WTC11 (cell line): ENCODE measurements at regions of chrX and their contacts with region 1.

Region 1: GRCh38 chrX:153032397-153033118 is 23.7 kb upstream of the PNMA3 start:
- DNase-seq: peak; percentile 64
- ATAC-seq: peak; percentile 76
- H3K4me3 Mint-ChIP-seq: peak overlapping the region; percentile 41; the same call in 1 of the 2 replicates
- H3K27ac Mint-ChIP-seq: no peak overlapping the region
- H3K4me1 Mint-ChIP-seq: no peaks in the 10 kb centered on the region
- H3K27me3 Mint-ChIP-seq: peaks cover 13% of the 10 kb centered on the region
- CTCF ChIP-seq: peak; percentile 77

Region 2: DNA sequence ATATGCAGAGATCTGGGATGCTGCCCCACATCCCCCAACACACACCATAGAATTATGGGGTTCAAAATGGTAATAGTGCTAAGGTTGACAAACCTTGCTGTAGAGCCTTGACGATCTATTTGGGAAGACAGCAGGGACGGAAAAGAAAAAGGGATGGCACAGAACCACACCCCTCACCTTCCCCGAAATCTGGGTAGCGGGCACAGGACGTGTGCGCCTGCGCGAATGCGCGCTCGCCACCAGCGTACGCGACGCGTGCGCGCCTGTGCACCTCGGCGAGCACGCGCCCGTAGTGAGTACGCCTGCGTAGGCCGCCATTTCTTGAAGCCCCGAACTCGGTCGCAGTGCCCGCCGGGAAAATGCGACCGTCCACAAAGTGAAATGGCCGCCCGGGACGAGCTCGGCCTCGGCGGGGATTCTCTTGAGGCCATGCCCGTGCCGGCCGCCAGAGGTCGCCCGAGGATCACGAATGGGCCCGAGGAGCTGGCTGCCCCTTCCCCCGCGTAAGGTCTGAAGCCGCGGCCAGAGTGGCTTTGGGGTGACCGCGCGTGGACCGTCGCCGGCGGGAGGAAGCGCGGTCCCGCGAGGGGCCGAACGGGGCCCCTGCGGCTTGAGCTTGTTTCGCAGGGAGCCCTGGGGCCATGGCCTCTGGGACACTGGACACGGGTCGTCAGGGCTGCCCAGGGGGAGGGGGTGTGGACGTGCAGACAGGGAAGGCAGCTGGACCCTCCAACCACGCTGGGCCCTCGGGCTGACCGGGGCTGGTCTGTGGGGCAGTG is 91.0 kb before region 1 on chrX:
- CTCF ChIA-PET with region 1: interaction called, 11 read pairs
- POLR2A ChIA-PET with region 1: no interaction called
- DNase-seq: peak; percentile 84
- ATAC-seq: peak; percentile 85
- H3K4me3 Mint-ChIP-seq: peak overlapping the region; percentile 67
- H3K27ac Mint-ChIP-seq: no peak overlapping the region; the same call in 1 of the 2 replicates
- H3K4me1 Mint-ChIP-seq: peaks cover 12% of the 10 kb centered on the region
- H3K27me3 Mint-ChIP-seq: peaks cover 3% of the 10 kb centered on the region
- CTCF ChIP-seq: peak; percentile 73

Region 3: DNA sequence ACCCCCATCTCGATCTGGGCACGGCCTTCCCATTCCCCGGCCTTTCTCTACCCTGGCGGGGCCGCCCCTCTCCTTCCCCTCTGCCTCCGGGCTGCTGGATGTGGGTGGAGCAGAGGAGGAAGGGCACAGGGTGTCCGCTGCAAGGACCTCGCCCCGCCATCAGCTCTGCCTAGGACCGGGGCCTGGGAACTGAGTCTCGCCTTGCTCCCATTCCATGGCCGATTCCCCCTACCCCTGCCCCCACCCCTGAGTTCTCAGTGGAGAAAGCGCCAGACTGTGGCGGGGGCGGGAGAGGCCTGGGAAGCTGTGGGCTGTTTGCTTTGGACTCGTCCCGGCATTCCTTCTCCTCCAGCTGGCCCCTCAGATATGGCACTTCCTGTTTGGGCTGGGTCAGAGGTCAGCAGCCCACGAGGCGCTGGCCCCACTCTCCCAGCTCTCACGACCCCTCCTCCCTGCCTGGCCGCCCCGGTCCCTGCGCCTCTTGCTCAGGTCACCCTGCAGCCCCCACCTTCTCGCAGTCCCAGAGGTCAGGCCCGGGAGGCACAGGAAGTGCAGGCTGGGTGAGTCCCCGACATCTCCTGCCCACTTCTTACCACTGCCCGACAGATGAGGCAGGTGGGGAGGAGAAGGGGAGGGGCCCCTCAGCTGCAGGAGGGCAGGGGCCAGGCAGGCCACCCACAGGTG is 455.8 kb after region 1 on chrX:
- CTCF ChIA-PET with region 1: no interaction called
- POLR2A ChIA-PET with region 1: no interaction called
- DNase-seq: no peak
- ATAC-seq: no peak; the same call in 1 of the 2 replicates
- H3K4me3 Mint-ChIP-seq: no peak overlapping the region
- H3K27ac Mint-ChIP-seq: no peak overlapping the region
- H3K4me1 Mint-ChIP-seq: peaks cover 6% of the 10 kb centered on the region; the same call in 1 of the 2 replicates
- H3K27me3 Mint-ChIP-seq: no peaks in the 10 kb centered on the region; the same call in 1 of the 2 replicates
- CTCF ChIP-seq: no peak